Breast epithelium (tissue), 4 donors: ENCODE measurements at regions of chr13 and their contacts with region 1.

Region 1: DNA sequence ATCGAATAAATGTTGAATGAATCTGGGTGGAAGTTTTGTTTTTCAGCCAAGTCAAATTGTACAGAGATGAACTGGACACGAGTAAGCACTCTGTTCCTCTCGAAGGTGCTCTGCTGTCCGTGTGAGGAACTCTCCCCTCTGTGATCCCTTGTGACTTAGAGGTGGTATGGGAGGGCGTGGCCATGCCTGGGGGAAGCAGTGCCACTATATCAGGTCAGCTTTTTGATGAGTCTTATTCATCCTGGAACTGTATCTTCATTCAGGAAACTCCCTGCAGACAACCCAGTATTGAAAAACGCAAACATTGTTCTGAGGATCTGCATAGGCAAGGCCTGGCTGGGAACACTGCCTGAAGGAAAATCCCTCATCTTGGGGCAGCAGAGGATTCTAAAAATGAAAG is 45.7 kb upstream of the FLT1 start:
- DNase-seq: no peak
- H3K4me3 ChIP-seq: no peak overlapping the region
- H3K27ac ChIP-seq: no peak overlapping the region
- H3K4me1 ChIP-seq: no peaks in the 10 kb centered on the region
- H3K27me3 ChIP-seq: no peaks in the 10 kb centered on the region
- CTCF ChIP-seq: no peak
- POLR2A ChIP-seq: no peak

Region 2: GRCh38 chr13:27510082-27510481 is 1030.5 kb before region 1 on chr13:
- intact Hi-C with region 1: no loop called
- DNase-seq: no peak
- H3K4me3 ChIP-seq: no peak overlapping the region
- H3K27ac ChIP-seq: no peak overlapping the region
- H3K4me1 ChIP-seq: no peaks in the 10 kb centered on the region
- H3K27me3 ChIP-seq: no peaks in the 10 kb centered on the region
- CTCF ChIP-seq: no peak
- POLR2A ChIP-seq: no peak

Region 3: GRCh38 chr13:28379371-28380083 is 161.1 kb before region 1 on chr13:
- intact Hi-C with region 1: loop called (anchors 10 kb)
- DNase-seq: no peak
- H3K4me3 ChIP-seq: no peak overlapping the region
- H3K27ac ChIP-seq: no peak overlapping the region
- H3K4me1 ChIP-seq: no peaks in the 10 kb centered on the region
- H3K27me3 ChIP-seq: no peaks in the 10 kb centered on the region
- CTCF ChIP-seq: no peak
- POLR2A ChIP-seq: no peak

Region 4: GRCh38 chr13:28582225-28582891 is 41.7 kb after region 1 on chr13:
- intact Hi-C with region 1: no loop called
- DNase-seq: no peak
- H3K4me3 ChIP-seq: no peak overlapping the region
- H3K27ac ChIP-seq: no peak overlapping the region
- H3K4me1 ChIP-seq: no peaks in the 10 kb centered on the region
- H3K27me3 ChIP-seq: no peaks in the 10 kb centered on the region
- CTCF ChIP-seq: no peak
- POLR2A ChIP-seq: no peak